Common myeloid progenitor, CD34-positive (primary cell): ENCODE measurements at regions of chr11 and their contacts with region 1.

Region 1: GRCh38 chr11:14499554-14500180 is at the start of gene COPB1:
- DNase-seq: peak; percentile 95 to 98 (median 98)
- H3K4me3 ChIP-seq: peak within 1 kb of the TSS; percentile 63 to 96 (median 92)
- H3K27ac ChIP-seq: peak within 1 kb of the TSS; percentile 71 to 89
- H3K4me1 ChIP-seq: peaks cover 9 to 21% (median 13%) of the 10 kb centered on the region in 4 experiments
- H3K27me3 ChIP-seq: no peaks in the 10 kb centered on the region

Region 2: GRCh38 chr11:14443638-14444037 is 56.0 kb before region 1 on chr11:
- CTCF ChIA-PET with region 1: no interaction called
- POLR2A ChIA-PET with region 1: no interaction called
- DNase-seq: no peak
- H3K4me3 ChIP-seq: no peak overlapping the region
- H3K27ac ChIP-seq: no peak overlapping the region
- H3K4me1 ChIP-seq: peaks cover 0 to 9% (median 0%) of the 10 kb centered on the region in 4 experiments
- H3K27me3 ChIP-seq: no peaks in the 10 kb centered on the region

Region 3: GRCh38 chr11:14519917-14520746 is 20.5 kb after region 1 on chr11 and contains the start of gene PSMA1:
- CTCF ChIA-PET with region 1: interaction called, 9 read pairs
- POLR2A ChIA-PET with region 1: interaction called, 12 read pairs
- DNase-seq: peak; percentile 95 to 98 (median 96)
- H3K4me3 ChIP-seq: peak within 1 kb of the TSS; percentile 68 to 99 (median 96)
- H3K27ac ChIP-seq: peak within 1 kb of the TSS; percentile 97 to 99
- H3K4me1 ChIP-seq: peaks cover 9 to 20% (median 16%) of the 10 kb centered on the region in 4 experiments
- H3K27me3 ChIP-seq: no peaks in the 10 kb centered on the region